Activated CD4-positive, alpha-beta memory T cell treated with anti-CD3 and anti-CD28 coated beads, Interleukin-2, amount 10 ng/mL, durations not matched to agents 7 days and 5 days (primary cell): ENCODE measurements at regions of chr4 and their contacts with region 1.

Region 1: GRCh38 chr4:103046416-103047290 is 27.1 kb upstream of the SLC9B1 start:
- DNase-seq: peak; percentile 26
- H3K4me3 Mint-ChIP-seq: no peak overlapping the region
- H3K27ac Mint-ChIP-seq: no peak overlapping the region
- H3K4me1 Mint-ChIP-seq: peaks cover 11% of the 10 kb centered on the region
- H3K27me3 Mint-ChIP-seq: no peaks in the 10 kb centered on the region

Region 2: GRCh38 chr4:103091601-103092223 is 45.1 kb after region 1 on chr4:
- CTCF ChIA-PET with region 1: interaction called, 46 read pairs
- POLR2A ChIA-PET with region 1: interaction called, 3 read pairs
- DNase-seq: peak; percentile 56
- H3K4me3 Mint-ChIP-seq: peak overlapping the region; percentile 65
- H3K27ac Mint-ChIP-seq: peak overlapping the region; percentile 75
- H3K4me1 Mint-ChIP-seq: peaks cover 31% of the 10 kb centered on the region
- H3K27me3 Mint-ChIP-seq: no peaks in the 10 kb centered on the region